Endothelial cell of umbilical vein (primary cell): ENCODE measurements at regions of chr11 and their contacts with region 1.

Region 1: DNA sequence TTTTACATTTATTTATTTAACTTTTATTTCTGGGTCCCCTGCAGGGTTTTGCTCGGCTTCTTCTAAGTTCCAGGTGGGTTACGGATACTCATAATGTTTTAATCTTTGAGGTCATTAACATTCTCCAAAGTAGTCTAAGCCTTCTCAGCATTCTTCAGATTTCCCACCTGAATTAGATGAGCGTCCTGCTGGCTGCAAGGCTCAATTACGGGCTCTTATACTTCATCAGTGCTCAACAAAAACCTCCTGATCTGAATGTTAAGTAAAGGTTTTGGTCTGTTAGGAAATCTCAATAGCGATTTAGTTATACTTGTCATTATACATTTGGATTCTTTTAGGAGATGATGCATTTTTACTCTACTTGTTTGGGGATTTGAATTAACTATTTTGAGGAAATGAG is 27.3 kb upstream of the NFRKB start:
- DNase-seq: no peak
- H3K4me3 ChIP-seq: no peak overlapping the region
- H3K27ac ChIP-seq: no peak overlapping the region
- H3K4me1 ChIP-seq: no peaks in the 10 kb centered on the region
- H3K27me3 ChIP-seq: no peaks in the 10 kb centered on the region
- CTCF ChIP-seq: no peak
- POLR2A ChIP-seq: no peak

Region 2: DNA sequence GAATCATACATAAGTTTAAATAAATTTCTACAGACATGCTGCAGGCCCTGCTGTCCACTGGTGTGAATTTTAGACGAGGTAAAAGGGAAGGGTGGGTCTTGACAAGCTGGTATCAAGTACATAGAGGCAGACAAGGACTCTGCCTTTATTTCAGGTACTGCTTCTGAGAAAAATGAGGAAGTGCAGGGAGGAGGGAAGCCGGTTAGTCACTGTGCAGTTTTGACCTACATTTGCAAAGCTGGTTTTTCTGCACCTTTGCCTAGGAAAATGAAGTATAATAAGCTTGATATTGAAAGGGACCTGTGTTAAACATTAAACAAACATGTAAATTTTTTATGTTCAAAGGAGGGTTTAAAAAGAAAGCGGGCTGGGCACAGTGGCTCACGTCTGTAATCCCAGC is 82.4 kb before region 1 on chr11:
- CTCF ChIA-PET with region 1: no interaction called
- POLR2A ChIA-PET with region 1: no interaction called
- dilution Hi-C with region 1: no loop called
- intact Hi-C with region 1: no loop called
- DNase-seq: no peak
- H3K4me3 ChIP-seq: no peak overlapping the region
- H3K27ac ChIP-seq: no peak overlapping the region
- H3K4me1 ChIP-seq: no peaks in the 10 kb centered on the region
- H3K27me3 ChIP-seq: no peaks in the 10 kb centered on the region
- CTCF ChIP-seq: no peak
- POLR2A ChIP-seq: no peak

Region 3: GRCh38 chr11:130124096-130124495 is 201.4 kb after region 1 on chr11:
- CTCF ChIA-PET with region 1: interaction called, 399 read pairs
- POLR2A ChIA-PET with region 1: no interaction called
- dilution Hi-C with region 1: no loop called
- intact Hi-C with region 1: no loop called
- DNase-seq: peak; percentile 72
- H3K4me3 ChIP-seq: no peak overlapping the region
- H3K27ac ChIP-seq: peak overlapping the region; percentile 60
- H3K4me1 ChIP-seq: peaks cover 54% of the 10 kb centered on the region
- H3K27me3 ChIP-seq: no peaks in the 10 kb centered on the region
- CTCF ChIP-seq: no peak
- POLR2A ChIP-seq: no peak

Region 4: GRCh38 chr11:130145975-130146776 is 223.5 kb after region 1 on chr11:
- CTCF ChIA-PET with region 1: interaction called, 77 read pairs
- POLR2A ChIA-PET with region 1: no interaction called
- dilution Hi-C with region 1: no loop called
- intact Hi-C with region 1: loop called (anchors 1 kb)
- DNase-seq: peak; percentile 26
- H3K4me3 ChIP-seq: no peak overlapping the region
- H3K27ac ChIP-seq: no peak overlapping the region
- H3K4me1 ChIP-seq: peaks cover 6% of the 10 kb centered on the region
- H3K27me3 ChIP-seq: no peaks in the 10 kb centered on the region
- CTCF ChIP-seq: peak; percentile 15 to 41
- POLR2A ChIP-seq: no peak